ENCODE measurements at regions of chr1 and their contacts with region 1.

Region 1: DNA sequence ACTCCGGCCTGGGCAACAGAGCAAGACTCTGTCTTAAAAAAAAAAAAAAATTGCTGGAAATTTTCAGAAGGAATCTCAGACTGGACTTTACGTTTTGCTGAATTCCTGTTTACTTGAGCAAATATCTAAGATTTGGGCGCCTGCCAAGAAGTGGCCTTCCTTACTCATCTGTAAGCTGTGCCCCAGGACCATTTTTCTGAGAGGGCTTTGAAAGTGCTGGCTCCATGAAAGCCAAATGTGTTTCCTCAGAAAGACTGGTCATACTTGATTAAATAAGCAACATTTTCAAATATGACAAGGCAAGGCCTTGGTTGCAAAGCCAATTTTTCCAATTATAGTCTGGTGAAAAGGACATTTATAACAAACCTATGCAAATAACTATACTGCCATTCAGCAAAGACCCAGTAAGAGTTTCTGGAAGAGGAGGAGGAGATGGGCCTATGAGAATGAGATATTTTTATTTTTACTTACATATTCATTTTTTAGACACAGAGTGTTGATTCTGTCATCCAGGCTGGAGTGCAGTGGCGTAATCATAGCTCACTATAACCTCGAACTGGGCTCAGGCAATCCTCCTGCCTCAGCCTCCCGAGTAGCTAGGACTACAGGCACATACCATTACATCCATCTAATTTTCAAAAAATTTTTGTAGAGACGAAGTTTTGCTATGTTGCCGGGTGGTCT is 56.3 kb upstream of the HTR1D start:
- DNase-seq: no peak
- ATAC-seq: no peak
- H3K4me3 ChIP-seq: no peak overlapping the region
- H3K27ac ChIP-seq: no peak overlapping the region
- H3K4me1 ChIP-seq: no peaks in the 10 kb centered on the region
- H3K27me3 ChIP-seq: peaks cover 0 to 28% (median 11%) of the 10 kb centered on the region in 7 donors
- CTCF ChIP-seq: no peak

Region 2: GRCh38 chr1:22983934-22984333 is 289.7 kb before region 1 on chr1:
- intact Hi-C with region 1: loop called in 3 of 10 experiments (anchors 10 kb)
- DNase-seq: no peak
- ATAC-seq: no peak
- H3K4me3 ChIP-seq: no peak overlapping the region
- H3K27ac ChIP-seq: no peak overlapping the region
- H3K4me1 ChIP-seq: no peaks in the 10 kb centered on the region
- H3K27me3 ChIP-seq: peaks cover 0 to 3% (median 0%) of the 10 kb centered on the region in 7 donors
- CTCF ChIP-seq: no peak

Region 3: DNA sequence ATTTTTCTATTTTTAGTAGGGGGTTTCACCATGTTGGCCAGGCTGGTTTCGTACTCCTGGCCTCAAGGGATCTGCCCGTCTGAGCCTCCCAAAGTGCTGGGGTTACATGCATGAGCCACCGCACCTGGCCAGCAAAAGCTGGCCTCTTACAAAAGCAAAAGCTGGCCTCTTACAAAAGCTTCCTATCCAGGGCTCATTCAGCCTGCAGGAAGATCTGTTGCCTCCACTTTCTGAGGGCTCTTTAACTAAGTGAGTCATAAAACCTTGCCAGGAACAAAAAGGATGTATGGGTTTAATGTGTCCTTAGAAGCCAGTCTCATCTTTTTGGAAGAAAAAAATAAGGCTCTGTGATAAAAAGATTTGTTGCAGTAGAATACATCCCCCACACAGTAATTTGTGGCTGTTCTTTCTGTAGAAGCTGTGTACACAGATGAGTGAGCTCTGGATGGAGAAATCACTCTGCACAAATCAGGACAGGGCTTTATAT is 71.3 kb before region 1 on chr1:
- intact Hi-C with region 1: loop called in 1 of 10 experiments (anchors 10 kb)
- DNase-seq: no peak
- ATAC-seq: no peak
- H3K4me3 ChIP-seq: no peak overlapping the region
- H3K27ac ChIP-seq: no peak overlapping the region
- H3K4me1 ChIP-seq: no peaks in the 10 kb centered on the region
- H3K27me3 ChIP-seq: peaks cover 0 to 11% (median 0%) of the 10 kb centered on the region in 7 donors
- CTCF ChIP-seq: no peak

Region 4: GRCh38 chr1:23224714-23225648 is 48.6 kb before region 1 on chr1:
- intact Hi-C with region 1: loop called in 3 of 10 experiments (anchors 5 to 10 kb)
- DNase-seq: peak; percentile 39 to 42
- ATAC-seq: peak; percentile 28 to 92 (median 84)
- H3K4me3 ChIP-seq: peak overlapping the region in 2 of 10 donors; percentile 6 to 8
- H3K27ac ChIP-seq: peak overlapping the region in 7 of 10 donors; percentile 26 to 74 (median 55)
- H3K4me1 ChIP-seq: peaks cover 0 to 17% (median 7%) of the 10 kb centered on the region in 9 donors
- H3K27me3 ChIP-seq: peaks cover 0 to 7% (median 4%) of the 10 kb centered on the region in 7 donors
- CTCF ChIP-seq: no peak